A549 (cell line): ENCODE measurements at regions of chr15 and their contacts with region 1.

Region 1: DNA sequence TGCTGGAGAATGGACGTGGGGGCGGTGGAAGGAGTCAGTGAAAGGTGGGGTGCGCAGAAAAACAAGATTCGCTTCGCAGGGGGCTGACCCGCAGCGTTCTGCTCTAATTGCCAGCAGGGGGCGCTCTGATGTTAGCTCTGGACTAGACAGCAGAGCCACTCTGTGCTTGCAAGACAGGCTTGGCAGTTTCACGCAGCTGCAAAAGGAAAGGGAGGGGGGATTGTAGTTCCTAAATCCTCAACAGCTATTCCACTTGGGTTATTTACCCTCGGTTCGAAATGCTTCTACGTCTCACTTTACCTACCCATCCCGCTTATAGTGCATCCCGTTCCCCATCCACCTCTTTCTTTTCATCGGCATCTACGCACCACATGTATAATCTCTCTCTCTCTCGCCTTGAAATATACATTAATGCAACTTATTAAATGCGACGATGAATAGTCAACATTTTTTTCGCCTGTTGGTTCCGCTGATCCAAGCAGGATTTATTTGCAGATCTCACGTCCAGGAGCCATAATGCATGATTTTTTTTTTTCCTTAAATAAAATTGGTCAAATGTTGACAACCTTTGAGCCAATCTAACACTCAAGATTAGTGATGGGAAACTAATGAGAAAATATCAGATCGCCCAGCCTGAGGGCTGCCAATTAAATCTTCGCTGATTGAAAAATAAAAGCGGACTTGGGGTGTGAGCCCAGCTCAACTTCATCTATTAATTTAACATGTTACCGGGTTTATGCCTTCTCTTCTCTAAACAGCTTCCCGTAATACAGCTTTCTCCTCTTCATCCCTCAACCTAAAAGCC is 216.4 kb downstream of the MEIS2 start:
- DNase-seq: peak; percentile 72 to 79
- ATAC-seq: peak; percentile 94 to 98
- H3K4me3 ChIP-seq: 0 out of 3 replicates have a peak overlapping the region, but pooled peaks have one; percentile 11
- H3K27ac ChIP-seq: no peak overlapping the region
- H3K4me1 ChIP-seq: no peaks in the 10 kb centered on the region
- CTCF ChIP-seq: peak; percentile 69
- EP300 ChIP-seq: no peak
- POLR2A ChIP-seq: no peak
- RAD21 ChIP-seq: peak; percentile 82 to 86

Region 2: DNA sequence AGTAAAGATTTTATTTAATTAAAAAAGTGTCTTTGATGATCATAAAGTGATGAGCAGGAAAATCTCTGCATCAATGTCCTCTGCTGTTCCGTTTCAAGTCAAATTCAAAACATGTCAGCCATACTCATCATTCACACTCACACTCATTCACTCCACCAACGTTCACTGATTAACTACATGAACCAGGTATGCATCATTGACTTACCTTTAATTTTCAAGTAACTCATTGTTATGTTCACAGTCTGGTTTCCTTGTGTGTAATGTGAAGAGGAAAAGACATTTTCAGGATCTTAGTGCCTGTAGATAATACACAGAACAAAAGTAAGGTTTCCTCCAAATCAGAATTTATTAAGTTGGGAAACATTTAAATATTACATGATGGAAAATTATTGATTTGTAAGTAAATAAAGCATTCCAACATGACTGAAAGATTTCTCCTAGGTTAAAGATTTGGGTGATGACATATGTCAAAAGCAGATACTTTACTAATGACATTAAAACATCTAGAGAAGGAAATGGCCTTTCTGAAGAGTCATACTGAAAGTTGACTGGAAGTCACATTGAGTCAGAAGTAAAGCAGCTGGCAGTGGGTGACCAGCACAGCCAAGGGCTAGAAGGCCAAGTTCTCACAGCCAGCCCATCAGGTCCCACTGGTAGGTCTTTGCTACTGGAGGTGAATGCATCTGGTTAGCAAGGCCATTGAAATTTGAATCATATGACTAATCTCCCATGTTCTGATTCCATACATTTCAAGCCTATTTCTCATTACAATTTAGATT is 52.6 kb before region 1 on chr15:
- CTCF ChIA-PET with region 1: no interaction called
- POLR2A ChIA-PET with region 1: no interaction called
- DNase-seq: no peak
- ATAC-seq: no peak
- H3K4me3 ChIP-seq: no peak overlapping the region
- H3K27ac ChIP-seq: no peak overlapping the region
- H3K4me1 ChIP-seq: 0 out of 3 replicates have a peak, but pooled peaks cover 2% of the 10 kb centered on the region
- CTCF ChIP-seq: no peak
- EP300 ChIP-seq: no peak
- POLR2A ChIP-seq: no peak
- RAD21 ChIP-seq: no peak

Region 3: DNA sequence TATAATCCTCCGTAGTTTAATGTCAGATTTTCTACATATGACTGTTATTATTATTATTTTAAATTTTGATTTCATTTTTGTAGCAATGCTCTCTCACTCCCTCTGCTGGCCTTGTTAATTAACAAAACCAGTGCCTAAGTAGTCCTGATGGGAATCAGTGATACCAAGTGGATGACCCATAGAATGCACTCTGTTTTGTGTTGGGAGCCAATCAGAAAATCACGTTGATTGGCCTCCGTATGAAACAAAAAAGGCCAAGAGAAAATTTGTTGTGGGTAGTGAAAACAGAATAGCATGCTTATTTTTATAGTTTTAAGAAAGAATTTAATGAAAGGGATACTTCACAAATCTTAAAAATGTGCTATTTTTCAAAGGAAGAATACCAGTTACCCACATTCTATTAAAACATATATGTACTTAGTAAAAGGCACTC is 250.8 kb after region 1 on chr15:
- CTCF ChIA-PET with region 1: interaction called, 10 read pairs
- POLR2A ChIA-PET with region 1: no interaction called
- DNase-seq: peak; percentile 15 to 48
- ATAC-seq: peak; percentile 88 to 92
- H3K4me3 ChIP-seq: no peak overlapping the region
- H3K27ac ChIP-seq: no peak overlapping the region
- H3K4me1 ChIP-seq: 0 out of 3 replicates have a peak, but pooled peaks cover 3% of the 10 kb centered on the region
- CTCF ChIP-seq: peak; percentile 51
- EP300 ChIP-seq: no peak
- POLR2A ChIP-seq: no peak
- RAD21 ChIP-seq: peak; percentile 39 to 40; a peak in 3 of 5 replicates